Heart left ventricle (tissue), 16 donors: ENCODE measurements at regions of chr22 and their contacts with region 1.

Region 1: DNA sequence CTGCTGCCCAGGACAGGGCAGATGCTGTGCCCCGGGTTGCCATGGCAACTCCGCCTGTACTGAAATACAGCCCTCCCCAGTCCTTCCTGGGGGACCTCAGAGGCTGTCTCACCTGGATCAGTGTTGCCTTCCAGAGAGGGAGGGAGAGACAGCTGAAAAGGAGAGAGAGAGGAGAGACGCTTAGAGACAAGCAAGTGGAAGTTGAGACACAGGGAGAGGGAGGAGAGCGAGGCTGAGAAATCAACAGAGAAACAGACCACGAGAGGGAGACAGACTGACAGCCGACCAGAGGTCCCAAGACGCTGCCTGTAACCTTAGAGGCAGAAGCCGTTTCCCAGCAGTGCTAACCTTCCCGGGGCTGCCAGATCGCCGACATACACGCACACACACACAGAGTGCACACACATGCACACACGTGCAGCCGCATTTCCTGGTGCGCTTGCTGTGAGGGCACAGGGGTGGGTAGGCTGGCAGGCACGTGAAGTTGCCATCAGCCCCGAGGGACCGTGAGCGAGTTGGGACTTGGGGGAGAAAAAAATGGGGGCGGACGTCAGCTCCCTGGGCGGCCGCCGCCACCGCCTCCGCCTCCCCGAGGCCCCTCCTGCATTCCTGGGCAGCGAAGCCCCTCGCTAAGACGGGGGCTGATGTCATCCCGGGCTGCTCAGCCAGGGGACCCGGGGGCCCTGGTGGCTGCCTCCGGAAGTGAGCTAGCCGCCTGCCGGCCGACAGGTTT is 88.6 kb upstream of the CRYBB3 start:
- DNase-seq: peak; percentile 52 to 73 (median 66)
- ATAC-seq: peak; percentile 66 to 89 (median 86)
- H3K4me3 ChIP-seq: peak overlapping the region; percentile 41 to 72 (median 62)
- H3K27ac ChIP-seq: peak overlapping the region; percentile 25 to 81 (median 66)
- H3K4me1 ChIP-seq: peaks cover 0 to 41% (median 27%) of the 10 kb centered on the region in 12 donors
- H3K27me3 ChIP-seq: peaks cover 0 to 9% (median 0%) of the 10 kb centered on the region in 9 donors
- CTCF ChIP-seq: peak; percentile 15 to 71 (median 58)
- POLR2A ChIP-seq: no peak

Region 2: GRCh38 chr22:25081409-25081824 is 29.6 kb before region 1 on chr22:
- intact Hi-C with region 1: no loop called
- DNase-seq: no peak
- ATAC-seq: peak in 3 of 4 donors; percentile 11 to 41 (median 37)
- H3K4me3 ChIP-seq: no peak overlapping the region
- H3K27ac ChIP-seq: no peak overlapping the region
- H3K4me1 ChIP-seq: peaks cover 0 to 41% (median 11%) of the 10 kb centered on the region in 12 donors
- H3K27me3 ChIP-seq: no peaks in the 10 kb centered on the region
- CTCF ChIP-seq: peak; percentile 29 to 62 (median 52)
- POLR2A ChIP-seq: no peak

Region 3: DNA sequence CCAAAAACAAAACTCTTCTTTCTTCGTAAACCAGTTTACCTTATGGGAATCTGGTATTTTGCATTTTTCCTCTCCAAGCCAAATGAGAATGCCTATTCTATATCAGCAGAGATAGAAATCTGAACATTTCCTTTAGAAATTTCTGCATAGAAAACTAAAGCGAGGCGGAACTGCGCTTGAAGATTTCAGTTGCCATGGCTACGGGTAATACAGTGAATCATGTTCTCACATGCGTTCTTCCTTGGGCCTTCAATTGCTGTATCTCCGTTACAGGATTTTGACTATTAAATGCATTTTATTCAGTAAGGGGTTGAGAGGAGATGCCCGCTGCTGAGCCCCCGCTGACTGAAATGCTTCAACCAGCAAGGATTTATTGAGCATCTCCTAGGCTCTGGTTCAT is 19.6 kb before region 1 on chr22:
- intact Hi-C with region 1: loop called in 1 of 10 experiments (anchors 2 kb)
- DNase-seq: no peak
- ATAC-seq: no peak
- H3K4me3 ChIP-seq: no peak overlapping the region
- H3K27ac ChIP-seq: peak overlapping the region in 3 of 12 donors; percentile 63 to 83 (median 75)
- H3K4me1 ChIP-seq: peaks cover 0 to 61% (median 22%) of the 10 kb centered on the region in 12 donors
- H3K27me3 ChIP-seq: no peaks in the 10 kb centered on the region
- CTCF ChIP-seq: no peak
- POLR2A ChIP-seq: no peak

Region 4: GRCh38 chr22:25153961-25154666 is 43.1 kb after region 1 on chr22:
- intact Hi-C with region 1: no loop called
- DNase-seq: peak in 4 of 5 donors; percentile 50 to 82 (median 69)
- ATAC-seq: peak; percentile 87 to 95 (median 93)
- H3K4me3 ChIP-seq: no peak overlapping the region
- H3K27ac ChIP-seq: peak overlapping the region; percentile 11 to 84 (median 64)
- H3K4me1 ChIP-seq: peaks cover 0 to 46% (median 28%) of the 10 kb centered on the region in 12 donors
- H3K27me3 ChIP-seq: no peaks in the 10 kb centered on the region
- CTCF ChIP-seq: no peak
- POLR2A ChIP-seq: no peak

Region 5: GRCh38 chr22:25165785-25166184 is 54.8 kb after region 1 on chr22:
- intact Hi-C with region 1: loop called in 5 of 10 experiments (anchors 2 to 5 kb)
- DNase-seq: no peak
- ATAC-seq: no peak
- H3K4me3 ChIP-seq: no peak overlapping the region
- H3K27ac ChIP-seq: peak overlapping the region in 1 of 12 donors; percentile 24
- H3K4me1 ChIP-seq: peaks cover 0 to 6% (median 0%) of the 10 kb centered on the region in 12 donors
- H3K27me3 ChIP-seq: no peaks in the 10 kb centered on the region
- CTCF ChIP-seq: no peak
- POLR2A ChIP-seq: no peak

Region 6: GRCh38 chr22:25172153-25172552 is 61.1 kb after region 1 on chr22:
- intact Hi-C with region 1: loop called in 9 of 10 experiments (anchors 1 to 5 kb)
- DNase-seq: peak in 1 of 5 donors; percentile 55
- ATAC-seq: peak; percentile 71 to 77 (median 74)
- H3K4me3 ChIP-seq: no peak overlapping the region
- H3K27ac ChIP-seq: no peak overlapping the region
- H3K4me1 ChIP-seq: no peaks in the 10 kb centered on the region
- H3K27me3 ChIP-seq: no peaks in the 10 kb centered on the region
- CTCF ChIP-seq: peak; percentile 21 to 65 (median 52)
- POLR2A ChIP-seq: no peak

Region 7: DNA sequence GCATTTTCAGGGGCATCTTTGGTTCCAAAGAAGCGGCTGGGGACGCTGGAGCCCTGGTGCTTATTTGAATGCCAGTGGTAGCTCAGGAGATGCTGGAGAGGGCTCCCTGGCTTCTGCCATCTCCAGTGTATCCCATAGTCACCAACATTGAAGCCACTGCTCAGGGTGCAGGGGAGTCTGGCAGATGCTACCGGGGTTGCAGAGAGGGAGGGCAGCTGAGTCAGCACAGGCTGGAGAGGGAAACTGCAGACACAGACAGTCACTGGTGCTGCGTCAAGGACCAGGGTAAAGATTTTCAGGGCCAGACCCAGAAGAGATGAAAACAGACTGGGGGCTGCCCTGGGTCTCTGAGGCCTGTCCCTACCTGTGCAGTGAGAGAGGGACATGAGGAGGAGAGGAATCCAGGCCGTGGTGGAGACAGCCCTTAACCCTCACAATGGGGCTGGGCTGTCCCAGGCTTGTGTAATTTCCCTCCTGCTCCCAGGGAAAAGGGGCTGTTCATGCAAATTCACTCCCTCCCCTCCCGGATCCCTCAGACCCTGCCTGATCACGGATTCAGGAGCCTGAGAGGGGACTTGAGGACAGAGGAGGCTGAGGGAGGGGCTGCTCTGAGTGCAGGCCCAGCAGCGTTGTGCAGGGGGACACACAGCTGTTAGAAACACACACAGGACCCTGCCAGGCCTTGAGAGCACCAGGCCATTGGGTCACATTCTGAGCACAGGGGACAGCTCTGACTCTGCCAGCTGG is 326.6 kb after region 1 on chr22:
- intact Hi-C with region 1: no loop called
- DNase-seq: no peak
- ATAC-seq: no peak
- H3K4me3 ChIP-seq: no peak overlapping the region
- H3K27ac ChIP-seq: no peak overlapping the region
- H3K4me1 ChIP-seq: no peaks in the 10 kb centered on the region
- H3K27me3 ChIP-seq: no peaks in the 10 kb centered on the region
- CTCF ChIP-seq: no peak
- POLR2A ChIP-seq: no peak